ENCODE measurements at regions of chr18 and their contacts with region 1.

Region 1: DNA sequence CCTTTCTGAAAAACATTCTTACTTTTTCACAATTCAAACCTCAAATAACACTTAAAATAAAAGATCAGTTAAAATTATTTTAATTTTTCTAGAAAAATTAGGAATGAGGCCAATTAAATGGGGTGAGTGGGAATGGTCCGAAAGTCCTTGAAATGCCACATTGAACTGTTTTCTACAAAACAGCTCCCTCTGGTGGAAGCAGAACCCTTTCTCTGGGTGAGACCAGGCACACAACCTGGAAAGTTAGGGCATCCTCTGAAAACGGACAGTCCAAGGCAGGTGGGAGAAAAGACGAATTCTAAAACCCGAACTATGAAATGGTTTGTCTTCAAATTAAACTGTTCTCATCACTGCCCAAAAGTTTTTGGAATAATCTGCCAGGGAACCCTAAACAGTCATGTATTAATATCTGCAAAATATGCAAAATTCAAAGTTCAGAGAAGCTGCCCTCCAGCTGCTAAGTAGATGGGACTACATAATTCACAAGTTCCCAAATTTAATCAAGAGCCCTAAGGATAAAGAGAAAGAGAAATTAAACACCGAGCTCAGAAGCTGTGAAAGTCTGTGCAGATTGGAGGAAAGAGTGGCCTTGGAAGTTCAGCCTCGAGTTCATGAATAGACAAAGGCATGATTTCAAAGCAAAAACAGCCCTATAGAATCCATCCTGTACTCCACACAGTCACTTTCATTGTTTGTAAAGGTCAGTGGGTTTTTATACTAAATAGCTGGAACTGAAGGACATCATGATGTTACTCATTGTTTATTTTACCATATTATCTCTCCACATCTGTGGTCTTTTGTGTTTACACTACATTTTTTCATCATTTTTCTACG is 108.3 kb downstream of the PIEZO2 start:
- DNase-seq: peak in 2 of 4 donors; percentile 49 to 70
- ATAC-seq: peak; percentile 82
- H3K4me3 ChIP-seq: no peak overlapping the region
- H3K27ac ChIP-seq: no peak overlapping the region
- H3K4me1 ChIP-seq: no peaks in the 10 kb centered on the region
- H3K27me3 ChIP-seq: no peaks in the 10 kb centered on the region
- CTCF ChIP-seq: peak; percentile 47 to 66

Region 2: DNA sequence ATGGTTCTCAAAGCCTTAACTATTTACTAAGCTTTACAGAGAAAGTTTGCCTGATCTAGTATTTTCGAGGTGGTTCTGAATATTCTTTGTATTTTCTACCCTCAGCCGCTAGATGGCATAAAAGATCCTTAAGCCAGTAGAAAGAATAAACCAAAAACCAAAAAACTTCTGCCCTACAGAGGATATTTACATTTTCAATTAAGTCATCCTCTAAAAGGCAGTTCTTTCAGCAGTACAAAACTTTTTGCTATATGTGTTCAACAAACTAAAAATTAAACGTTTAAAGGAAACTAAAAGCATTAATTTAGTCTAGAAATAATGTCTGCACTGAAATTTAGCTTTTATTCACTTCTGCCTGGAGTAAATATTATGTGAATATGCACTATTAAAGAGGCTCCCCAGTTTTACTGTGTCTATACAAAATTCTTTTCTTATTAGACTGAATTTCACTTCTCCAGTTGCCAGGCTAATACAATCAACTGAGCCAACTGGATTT is 189.2 kb before region 1 on chr18:
- intact Hi-C with region 1: loop called in 1 of 2 experiments (anchors 5 kb)
- DNase-seq: peak in 2 of 4 donors; percentile 61 to 75
- ATAC-seq: peak; percentile 82
- H3K4me3 ChIP-seq: no peak overlapping the region
- H3K27ac ChIP-seq: no peak overlapping the region
- H3K4me1 ChIP-seq: no peaks in the 10 kb centered on the region
- H3K27me3 ChIP-seq: no peaks in the 10 kb centered on the region
- CTCF ChIP-seq: peak; percentile 40 to 67

Region 3: DNA sequence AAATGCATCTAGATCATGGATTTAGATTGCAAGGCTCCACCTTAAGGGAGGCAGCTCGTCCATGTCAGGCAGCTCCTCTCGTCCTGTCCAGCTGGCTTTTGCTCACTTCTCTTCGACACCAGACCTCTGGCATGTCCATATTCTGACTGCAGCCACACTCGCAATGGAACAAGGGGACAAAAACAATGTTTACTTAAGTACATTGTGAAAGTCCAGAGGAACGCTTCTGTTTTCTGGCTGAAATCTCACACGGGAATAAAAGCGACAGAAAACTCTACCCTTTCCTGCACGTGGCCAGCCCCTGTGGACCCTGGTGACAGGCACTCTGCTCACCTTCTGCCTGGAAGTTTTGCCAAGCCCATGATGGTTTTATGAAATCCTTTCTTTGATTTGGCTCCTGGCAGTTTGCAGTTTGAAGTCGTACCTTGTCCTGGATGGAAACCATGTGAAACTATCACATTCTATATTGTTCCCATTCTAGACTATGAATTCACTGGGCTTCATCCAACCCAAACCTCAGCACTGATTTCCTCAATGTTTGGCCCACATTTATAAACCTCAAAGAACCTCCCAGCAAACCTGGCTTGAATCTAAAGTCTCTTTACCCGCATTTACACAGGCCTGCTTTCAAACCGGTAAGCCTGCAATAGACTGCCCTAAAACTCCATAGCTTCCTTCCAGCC is 242.6 kb after region 1 on chr18:
- intact Hi-C with region 1: no loop called
- DNase-seq: peak in 2 of 4 donors; percentile 71 to 86
- ATAC-seq: no peak
- H3K4me3 ChIP-seq: no peak overlapping the region
- H3K27ac ChIP-seq: no peak overlapping the region
- H3K4me1 ChIP-seq: no peaks in the 10 kb centered on the region
- H3K27me3 ChIP-seq: no peaks in the 10 kb centered on the region
- CTCF ChIP-seq: no peak